Cardiac septum (tissue), 1 donor: ENCODE measurements at regions of chr17 and their contacts with region 1.

Region 1: GRCh38 chr17:55717898-55718735 is 4.5 kb downstream of the TMEM100 start:
- DNase-seq: peak; percentile 81

Region 2: GRCh38 chr17:55635253-55635914 is 82.7 kb before region 1 on chr17:
- intact Hi-C with region 1: loop called (anchors 5 kb)
- DNase-seq: no peak

Region 3: DNA sequence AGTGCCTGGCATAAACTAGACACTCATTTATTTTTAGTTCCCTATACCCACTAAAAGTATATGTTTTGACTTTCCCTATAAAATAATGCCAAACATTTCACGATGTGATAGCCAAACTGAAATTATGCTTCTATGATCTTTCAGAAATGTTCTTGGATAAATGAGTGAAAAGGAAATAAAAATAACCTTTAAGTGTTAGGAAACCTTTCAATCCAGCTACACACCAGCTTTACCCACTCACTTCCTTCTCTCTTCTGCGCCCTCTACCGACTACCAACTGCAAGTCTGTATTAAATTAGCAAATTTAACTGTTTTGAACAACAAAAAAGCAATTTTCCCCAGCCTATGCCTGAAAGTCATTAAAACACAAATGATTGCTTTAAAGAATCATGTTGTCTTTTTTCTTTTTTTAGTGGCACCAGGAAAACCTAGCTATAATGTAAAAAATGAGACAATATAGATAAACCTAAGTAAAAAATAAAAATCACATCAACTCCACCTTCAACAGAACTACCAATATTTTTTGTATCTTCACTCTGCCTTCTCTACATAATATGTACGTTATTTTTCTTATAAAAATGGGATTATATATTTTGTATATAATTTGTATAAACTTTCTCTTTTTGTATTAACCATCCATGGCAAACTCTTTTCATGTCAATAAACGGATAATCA is 17.8 kb after region 1 on chr17:
- intact Hi-C with region 1: no loop called
- DNase-seq: no peak

Region 4: DNA sequence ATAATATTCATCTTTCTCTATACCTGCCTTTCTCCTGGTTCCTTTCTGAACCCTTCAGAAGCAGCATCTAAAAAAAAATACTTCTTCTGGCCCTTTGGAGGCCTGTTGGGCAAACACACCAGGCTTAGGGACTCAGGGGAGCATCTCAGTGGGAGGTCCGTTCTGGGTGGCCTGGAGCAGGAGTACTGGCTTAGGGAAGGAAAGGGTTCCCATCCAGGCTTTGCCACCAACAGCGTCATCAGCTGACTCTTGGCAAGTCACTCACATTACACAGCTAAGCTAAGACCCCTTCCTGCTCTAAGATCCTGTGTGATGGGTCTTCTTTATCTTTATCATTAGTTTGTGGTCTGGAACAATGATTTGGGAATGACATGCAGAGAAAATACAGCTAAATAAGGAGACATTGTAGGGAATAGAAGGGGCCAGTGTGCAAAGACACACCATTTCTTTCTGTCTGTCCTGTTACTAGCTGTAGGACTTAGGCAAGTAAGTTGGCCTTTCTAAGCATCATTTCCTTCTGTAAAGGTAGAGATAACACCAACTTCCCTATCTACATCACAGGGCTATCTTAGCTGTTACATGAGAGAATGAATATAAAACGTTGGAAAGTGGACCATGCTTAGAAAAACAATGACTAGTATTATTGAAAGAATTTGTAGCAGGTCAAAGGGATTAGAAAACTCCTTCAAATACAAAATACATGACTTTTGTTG is 42.7 kb after region 1 on chr17:
- intact Hi-C with region 1: no loop called
- DNase-seq: no peak

Region 5: DNA sequence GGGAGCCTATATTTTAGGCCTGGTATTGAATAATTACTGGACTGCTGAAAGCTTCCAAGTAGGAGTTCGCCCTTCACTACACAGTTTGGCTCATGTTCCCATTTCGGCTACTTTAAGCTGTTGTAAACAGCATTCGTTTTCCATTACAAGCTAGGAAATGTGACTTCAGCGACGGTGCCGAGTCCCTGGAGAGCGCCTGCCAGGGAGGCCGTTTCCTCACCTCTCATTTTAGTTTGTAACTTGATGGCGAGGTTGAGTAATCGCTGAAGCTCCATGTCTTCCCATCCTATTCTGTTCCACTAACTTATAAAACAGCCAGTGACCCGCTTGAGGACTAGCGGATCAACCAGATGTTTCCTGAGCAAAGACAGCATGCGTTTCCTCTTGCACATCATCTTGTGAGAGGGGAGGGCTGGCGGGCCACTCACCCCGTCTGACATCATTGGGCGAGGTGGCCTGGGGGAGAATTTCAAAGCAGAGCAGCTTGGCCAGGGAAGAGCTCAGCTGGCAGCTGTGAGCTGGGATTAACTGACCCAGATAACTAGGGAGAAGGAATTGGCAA is 65.6 kb after region 1 on chr17:
- intact Hi-C with region 1: no loop called
- DNase-seq: peak; percentile 78

Region 6: GRCh38 chr17:56373981-56374833 is 656.1 kb after region 1 on chr17:
- intact Hi-C with region 1: no loop called
- DNase-seq: no peak